ENCODE measurements at regions of chr5 and their contacts with region 1.

Region 1: DNA sequence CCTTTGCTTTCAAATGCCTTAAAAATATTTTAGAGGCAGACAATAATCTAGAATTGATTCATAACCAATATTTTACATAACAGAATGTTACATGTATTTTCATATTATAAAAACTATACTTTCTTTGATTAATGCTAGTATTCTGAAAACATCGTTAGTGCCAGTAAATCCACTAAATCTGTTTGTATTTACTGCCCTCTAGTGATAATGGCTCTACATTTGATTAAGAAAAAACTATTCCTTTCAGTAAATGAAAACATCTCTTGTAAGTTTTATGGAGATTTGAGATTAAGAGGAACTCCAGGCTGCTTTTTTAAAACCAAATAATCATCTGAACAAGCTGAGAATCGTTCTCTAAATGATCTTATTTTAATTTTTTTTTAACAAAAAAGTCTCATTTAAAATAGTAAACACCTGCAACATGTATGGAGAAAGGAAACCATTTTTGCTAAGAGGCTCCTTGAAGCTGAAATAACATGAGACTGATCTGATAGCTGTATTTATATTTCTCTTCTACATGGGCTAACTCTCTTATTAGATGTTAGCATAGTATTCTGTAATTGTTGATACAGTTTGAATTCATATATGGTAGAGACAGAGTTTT is 424.7 kb downstream of the RAB3C start:
- DNase-seq: peak; percentile 54
- H3K4me3 ChIP-seq: no peak overlapping the region
- H3K27ac ChIP-seq: no peak overlapping the region
- H3K4me1 ChIP-seq: no peaks in the 10 kb centered on the region
- H3K27me3 ChIP-seq: no peaks in the 10 kb centered on the region

Region 2: DNA sequence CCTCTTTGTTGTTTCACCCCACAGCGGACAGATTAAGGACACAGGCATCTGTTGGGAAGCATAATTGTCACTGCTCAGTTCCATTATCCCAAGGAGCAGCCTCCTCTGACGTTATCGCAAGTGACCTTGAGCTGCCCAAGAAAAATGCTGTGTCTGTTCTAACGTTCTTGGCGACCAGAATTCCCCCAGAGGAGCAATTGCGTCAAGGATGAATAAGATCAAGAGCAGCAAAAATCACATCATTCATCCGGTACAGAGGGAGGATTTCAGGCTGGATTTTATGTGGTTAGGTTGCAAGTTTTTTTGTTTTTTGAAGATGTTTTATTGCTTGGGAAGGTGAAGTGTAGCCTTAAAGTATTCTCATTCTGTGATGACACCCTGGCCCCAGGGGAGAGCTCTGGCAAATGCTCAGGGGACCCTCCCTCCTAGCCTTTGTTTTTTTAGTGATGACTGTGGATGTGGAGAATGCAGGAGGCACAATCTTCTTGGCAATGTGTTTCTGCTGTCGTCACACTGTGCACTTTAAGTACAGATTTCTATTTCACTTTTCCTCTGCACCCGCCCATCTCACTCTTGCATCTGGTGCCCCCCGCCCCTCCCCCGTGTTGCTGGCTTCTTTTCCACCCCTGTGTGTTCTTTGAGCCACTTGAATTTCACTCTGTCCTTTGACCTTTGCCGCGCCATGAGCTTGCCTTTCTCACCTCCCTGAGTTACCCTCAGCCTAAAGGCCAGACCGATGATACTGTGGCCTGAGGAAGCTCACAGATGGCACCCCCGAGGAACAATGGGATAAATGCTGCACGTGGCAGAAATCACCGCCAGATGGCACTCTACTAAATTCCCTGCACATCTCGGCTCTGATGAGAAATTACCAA is 116.2 kb before region 1 on chr5:
- in situ Hi-C with region 1: loop called (anchors 10 kb)
- DNase-seq: peak; percentile 87
- H3K4me3 ChIP-seq: peak overlapping the region; percentile 72
- H3K27ac ChIP-seq: peak overlapping the region; percentile 84
- H3K4me1 ChIP-seq: peaks cover 14% of the 10 kb centered on the region
- H3K27me3 ChIP-seq: no peaks in the 10 kb centered on the region

Region 3: DNA sequence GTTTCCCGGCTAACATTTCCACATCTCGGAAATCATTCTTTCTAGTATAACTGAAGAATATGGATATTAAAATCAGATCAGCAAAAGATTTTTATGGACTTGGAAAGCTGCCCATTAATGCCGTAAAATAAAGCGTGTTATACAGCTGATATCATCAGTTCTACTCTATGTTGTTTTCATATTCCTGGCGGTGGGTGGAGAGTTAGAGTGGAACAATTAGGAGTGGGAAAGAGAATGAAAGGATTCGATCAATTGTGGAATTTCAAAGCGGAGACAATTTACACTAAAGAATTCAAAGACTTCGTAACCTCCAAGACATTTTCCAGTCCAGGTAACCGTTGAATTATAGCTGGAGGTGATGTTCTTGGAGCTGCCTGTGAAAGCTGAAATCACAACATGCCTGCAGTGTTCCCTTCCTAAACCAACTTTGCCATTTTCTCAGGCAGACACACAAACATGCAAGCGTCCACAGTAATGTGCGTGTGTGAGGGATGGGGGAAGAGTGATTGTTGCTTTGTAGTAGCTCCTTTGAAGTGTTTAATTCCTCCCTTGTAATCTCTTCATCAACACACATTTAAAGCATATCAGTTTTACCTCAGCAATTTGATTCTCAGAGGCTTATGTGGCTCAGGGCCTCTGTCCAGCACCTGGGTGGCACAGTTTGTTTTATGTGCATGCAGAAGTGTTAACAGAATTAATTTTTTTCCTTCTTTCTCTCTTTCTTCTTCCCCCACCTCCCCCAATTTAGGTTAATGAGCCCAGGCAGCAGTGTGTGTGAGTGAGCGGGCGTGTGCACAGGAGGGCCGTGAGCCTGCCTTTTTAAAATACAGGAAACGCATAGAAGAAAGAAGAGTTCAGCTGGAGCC is 119.4 kb after region 1 on chr5:
- in situ Hi-C with region 1: no loop called
- DNase-seq: peak; percentile 54
- H3K4me3 ChIP-seq: peak overlapping the region; percentile 72
- H3K27ac ChIP-seq: peak overlapping the region; percentile 93
- H3K4me1 ChIP-seq: peaks cover 39% of the 10 kb centered on the region
- H3K27me3 ChIP-seq: no peaks in the 10 kb centered on the region

Region 4: GRCh38 chr5:59143926-59144333 is 136.4 kb after region 1 on chr5:
- in situ Hi-C with region 1: no loop called
- DNase-seq: no peak
- H3K4me3 ChIP-seq: no peak overlapping the region
- H3K27ac ChIP-seq: no peak overlapping the region
- H3K4me1 ChIP-seq: no peaks in the 10 kb centered on the region
- H3K27me3 ChIP-seq: no peaks in the 10 kb centered on the region